Activated CD4-positive, alpha-beta T cell treated with anti-CD3 and anti-CD28 coated beads, Interleukin-2, amount 10 ng/mL, durations not matched to agents 7 days and 5 days (primary cell): ENCODE measurements at regions of chr18 and their contacts with region 1.

Region 1: GRCh38 chr18:63320046-63320689 is 599 bp upstream of the BCL2 start:
- DNase-seq: peak; percentile 92
- H3K4me3 Mint-ChIP-seq: peak overlapping the region; percentile 99
- H3K27ac Mint-ChIP-seq: peak overlapping the region; percentile 91
- H3K4me1 Mint-ChIP-seq: peaks cover 27% of the 10 kb centered on the region
- H3K27me3 Mint-ChIP-seq: no peaks in the 10 kb centered on the region

Region 2: GRCh38 chr18:63016270-63016669 is 303.9 kb before region 1 on chr18:
- CTCF ChIA-PET with region 1: interaction called, 14 read pairs
- POLR2A ChIA-PET with region 1: no interaction called
- DNase-seq: peak; percentile 64
- H3K4me3 Mint-ChIP-seq: no peak overlapping the region
- H3K27ac Mint-ChIP-seq: no peak overlapping the region
- H3K4me1 Mint-ChIP-seq: no peaks in the 10 kb centered on the region
- H3K27me3 Mint-ChIP-seq: peaks cover 41% of the 10 kb centered on the region

Region 3: GRCh38 chr18:63141778-63142176 is 178.4 kb before region 1 on chr18:
- CTCF ChIA-PET with region 1: interaction called, 16 read pairs
- POLR2A ChIA-PET with region 1: no interaction called
- DNase-seq: no peak
- H3K4me3 Mint-ChIP-seq: no peak overlapping the region
- H3K27ac Mint-ChIP-seq: no peak overlapping the region
- H3K4me1 Mint-ChIP-seq: peaks cover 74% of the 10 kb centered on the region
- H3K27me3 Mint-ChIP-seq: no peaks in the 10 kb centered on the region

Region 4: DNA sequence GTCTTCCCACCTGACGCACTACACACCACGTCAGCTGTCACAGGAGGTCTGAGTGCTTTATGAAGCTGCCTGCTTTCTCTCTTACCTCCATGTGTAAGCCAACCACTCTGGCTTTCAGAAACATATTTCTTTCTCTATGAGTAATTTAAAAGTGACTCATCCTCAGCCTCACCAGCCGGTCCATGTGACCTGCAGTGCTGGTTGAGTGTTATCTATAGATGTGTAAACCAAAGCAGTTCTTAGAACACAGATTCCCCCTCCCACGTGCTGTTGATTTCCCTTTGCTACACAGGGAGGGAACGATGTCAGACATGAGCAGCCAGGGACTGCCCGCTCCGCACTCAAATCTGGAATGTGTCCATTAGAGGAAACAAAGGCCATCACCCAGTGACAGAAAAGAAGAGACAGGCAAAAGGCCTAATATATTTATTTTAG is 158.4 kb before region 1 on chr18:
- CTCF ChIA-PET with region 1: interaction called, 37 read pairs
- POLR2A ChIA-PET with region 1: no interaction called
- DNase-seq: peak; percentile 86
- H3K4me3 Mint-ChIP-seq: peak overlapping the region; percentile 78
- H3K27ac Mint-ChIP-seq: peak overlapping the region; percentile 95
- H3K4me1 Mint-ChIP-seq: peaks cover 93% of the 10 kb centered on the region
- H3K27me3 Mint-ChIP-seq: no peaks in the 10 kb centered on the region

Region 5: DNA sequence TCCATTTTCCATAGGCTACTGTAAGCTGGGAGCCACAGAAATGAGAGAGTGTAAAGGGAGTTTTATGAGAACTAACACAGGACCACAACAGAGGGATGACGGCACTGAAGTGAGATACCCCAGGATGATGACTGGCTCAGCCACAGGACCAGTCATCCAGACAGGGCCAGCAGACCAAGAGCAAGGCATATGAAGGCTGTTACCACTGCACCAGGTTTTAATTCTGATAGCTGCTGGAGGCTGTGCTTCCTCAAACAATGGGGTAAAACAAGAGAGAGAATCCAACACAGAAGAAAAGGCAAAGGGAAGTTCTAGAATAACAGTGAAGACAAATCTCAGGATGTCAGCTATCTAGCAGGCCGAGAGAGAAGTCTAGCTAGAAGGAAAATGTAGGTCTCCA is 95.5 kb before region 1 on chr18:
- CTCF ChIA-PET with region 1: interaction called, 13 read pairs
- POLR2A ChIA-PET with region 1: no interaction called
- DNase-seq: no peak
- H3K4me3 Mint-ChIP-seq: no peak overlapping the region
- H3K27ac Mint-ChIP-seq: peak overlapping the region; percentile 36
- H3K4me1 Mint-ChIP-seq: peaks cover 74% of the 10 kb centered on the region
- H3K27me3 Mint-ChIP-seq: no peaks in the 10 kb centered on the region

Region 6: DNA sequence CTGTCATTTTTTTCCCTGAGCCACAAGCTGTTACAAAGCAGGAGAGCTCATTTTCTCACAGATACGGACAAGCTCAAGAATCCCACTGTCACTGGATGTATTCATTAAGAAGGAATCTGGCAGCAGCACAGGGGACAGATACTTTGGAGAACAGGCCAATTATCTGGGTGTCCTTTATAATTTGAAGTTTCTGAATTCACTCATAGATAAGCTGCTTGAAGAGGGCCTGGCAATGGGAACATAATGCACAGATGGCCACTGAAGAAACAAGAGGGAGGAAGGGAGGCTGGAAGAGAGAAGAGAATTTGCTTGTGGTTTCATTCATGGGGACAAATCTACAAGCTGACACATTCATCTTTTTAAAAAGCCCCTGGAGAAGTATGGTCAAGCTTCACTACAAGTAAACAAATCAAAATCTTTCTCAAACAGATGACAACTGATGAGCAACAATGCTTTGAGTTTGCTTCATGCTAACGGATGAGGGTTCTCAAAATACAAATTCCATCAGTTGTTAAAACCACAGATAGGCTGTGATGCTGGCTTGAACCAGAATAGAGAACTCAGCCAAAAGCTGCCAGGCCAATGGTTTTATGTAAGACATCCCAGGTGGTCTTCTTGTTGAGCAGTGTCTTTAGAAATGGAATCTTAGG is 12.5 kb before region 1 on chr18:
- CTCF ChIA-PET with region 1: interaction called, 30 read pairs
- POLR2A ChIA-PET with region 1: no interaction called
- DNase-seq: no peak
- H3K4me3 Mint-ChIP-seq: no peak overlapping the region
- H3K27ac Mint-ChIP-seq: peak overlapping the region; percentile 21
- H3K4me1 Mint-ChIP-seq: peaks cover 84% of the 10 kb centered on the region
- H3K27me3 Mint-ChIP-seq: no peaks in the 10 kb centered on the region